T-cell (primary cell): ENCODE measurements at regions of chr17 and their contacts with region 1.

Region 1: DNA sequence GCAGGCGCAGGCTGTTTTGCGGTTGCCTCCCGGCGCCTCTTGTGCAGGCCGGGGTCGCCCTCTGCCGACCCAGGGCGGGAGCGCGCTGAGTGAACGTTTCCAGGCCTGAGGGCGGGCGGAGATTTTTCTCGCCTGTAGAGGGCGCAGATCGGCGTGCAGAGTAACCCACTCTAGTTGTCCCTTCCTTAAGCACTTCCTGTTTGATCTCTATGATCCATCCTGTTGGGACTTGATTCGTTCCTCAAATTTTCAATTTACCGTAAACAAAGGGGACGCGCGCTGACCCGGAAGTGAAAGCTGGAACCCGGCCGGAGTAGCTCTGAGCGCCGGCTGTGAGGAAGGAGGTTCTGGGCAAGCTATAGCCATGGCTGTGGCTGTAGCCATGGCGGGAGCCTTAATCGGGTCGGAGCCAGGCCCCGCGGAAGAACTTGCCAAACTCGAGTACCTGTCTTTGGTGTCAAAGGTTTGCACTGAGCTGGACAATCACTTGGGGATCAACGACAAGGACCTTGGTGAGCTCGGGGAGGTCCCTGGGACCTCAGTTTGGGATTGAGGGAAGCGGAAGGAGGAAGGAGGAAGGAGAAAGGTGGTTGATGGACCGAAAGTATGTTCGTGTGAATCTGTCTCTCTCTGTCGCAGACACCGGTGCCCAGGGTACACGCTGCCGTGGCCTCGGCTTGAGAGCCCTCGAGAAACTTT is at the start of gene DHX8:
- DNase-seq: peak; percentile 92 to 100 (median 98)
- ATAC-seq: peak; percentile 95 to 99 (median 96)
- H3K4me3 ChIP-seq: peak within 1 kb of the TSS; percentile 85 to 96
- H3K4me3 Mint-ChIP-seq: peak within 1 kb of the TSS; percentile 100
- H3K27ac ChIP-seq: peak within 1 kb of the TSS; percentile 70
- H3K27ac Mint-ChIP-seq: peak within 1 kb of the TSS; percentile 99
- H3K4me1 ChIP-seq: peaks cover 15 to 24% of the 10 kb centered on the region in 2 experiments
- H3K4me1 Mint-ChIP-seq: peaks cover 25 to 41% (median 39%) of the 10 kb centered on the region in 3 donors
- H3K27me3 ChIP-seq: no peaks in the 10 kb centered on the region
- H3K27me3 Mint-ChIP-seq: no peaks in the 10 kb centered on the region
- total RNA-seq, gene DHX8: 68.9 to 103 (median 76.1) TPM

Region 2: DNA sequence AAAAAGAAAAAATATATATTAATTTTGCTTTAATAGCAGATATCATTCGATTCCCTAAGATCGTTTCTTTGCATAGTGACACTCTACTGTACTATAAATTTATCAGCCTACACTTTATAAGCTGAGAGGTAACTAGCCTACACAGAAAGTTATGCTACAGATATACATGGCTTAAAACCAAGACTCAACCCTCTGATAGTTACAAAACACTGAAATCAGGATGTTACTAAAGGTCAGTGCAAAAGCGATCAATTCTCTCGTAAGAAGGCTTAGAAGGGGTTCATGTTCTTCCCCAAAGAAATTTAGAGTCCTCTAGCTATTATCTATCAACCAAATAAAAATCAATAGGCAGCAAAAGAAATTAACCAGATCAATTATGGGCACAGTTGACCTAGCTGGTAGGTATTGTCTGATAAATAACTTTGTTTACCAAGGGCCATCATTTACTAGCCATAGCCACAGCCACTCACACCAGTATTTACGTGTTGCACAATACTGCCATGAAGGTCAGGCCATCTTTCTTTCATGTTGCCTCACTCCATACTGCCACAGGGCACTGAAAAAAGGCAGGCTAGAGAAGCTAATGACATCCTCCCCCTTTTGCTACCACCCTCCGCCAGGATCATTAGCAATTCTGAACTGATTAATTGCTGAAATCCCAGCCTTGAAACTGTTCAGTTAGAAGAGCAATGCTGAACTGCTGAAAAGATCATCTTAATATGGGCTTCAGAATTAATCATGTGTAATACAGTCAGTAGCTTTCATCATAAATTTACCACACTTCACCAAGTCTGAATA is 415.1 kb before region 1 on chr17:
- CTCF ChIA-PET with region 1: interaction called in 1 of 2 experiments, 12 read pairs
- POLR2A ChIA-PET with region 1: no interaction called
- DNase-seq: no peak
- ATAC-seq: no peak
- H3K4me3 ChIP-seq: no peak overlapping the region
- H3K4me3 Mint-ChIP-seq: no peak overlapping the region
- H3K27ac ChIP-seq: no peak overlapping the region
- H3K27ac Mint-ChIP-seq: no peak overlapping the region
- H3K4me1 ChIP-seq: no peaks in the 10 kb centered on the region
- H3K4me1 Mint-ChIP-seq: no peaks in the 10 kb centered on the region
- H3K27me3 ChIP-seq: no peaks in the 10 kb centered on the region
- H3K27me3 Mint-ChIP-seq: no peaks in the 10 kb centered on the region

Region 3: DNA sequence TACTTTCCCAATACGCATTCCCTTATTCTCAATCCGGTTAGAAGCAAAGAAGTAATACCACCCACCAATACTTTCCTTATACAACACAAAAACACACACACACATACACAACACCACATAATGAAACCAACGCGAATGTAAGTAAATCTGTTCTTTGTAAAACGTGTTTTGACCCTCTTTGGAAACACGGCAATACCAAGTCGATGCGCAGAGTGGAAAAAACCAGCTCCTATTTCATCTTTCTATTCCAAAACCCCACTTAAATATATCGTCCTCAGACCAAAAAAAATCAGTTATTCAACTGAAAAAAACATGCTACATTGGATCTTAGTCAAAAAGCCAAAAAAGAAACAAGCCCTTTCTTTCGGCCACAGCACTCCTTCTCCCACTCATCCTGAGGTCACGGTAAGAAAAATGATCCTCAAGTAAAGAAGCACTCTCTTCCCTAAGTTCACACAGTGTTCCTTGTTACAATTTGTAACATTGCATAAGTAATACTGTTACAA is 116.0 kb before region 1 on chr17:
- CTCF ChIA-PET with region 1: interaction called in 1 of 2 experiments, 20 read pairs
- POLR2A ChIA-PET with region 1: interaction called, 3 to 23 read pairs
- DNase-seq: peak in 3 of 35 experiments; percentile 6 to 78 (median 36)
- ATAC-seq: peak; percentile 35 to 53 (median 44)
- H3K4me3 ChIP-seq: peak overlapping the region; percentile 84 to 86
- H3K4me3 Mint-ChIP-seq: peak overlapping the region; percentile 78 to 97 (median 90)
- H3K27ac ChIP-seq: peak overlapping the region; percentile 96
- H3K27ac Mint-ChIP-seq: peak overlapping the region; percentile 100
- H3K4me1 ChIP-seq: peaks cover 12 to 33% of the 10 kb centered on the region in 2 experiments
- H3K4me1 Mint-ChIP-seq: peaks cover 38 to 58% (median 52%) of the 10 kb centered on the region in 3 donors
- H3K27me3 ChIP-seq: no peaks in the 10 kb centered on the region
- H3K27me3 Mint-ChIP-seq: no peaks in the 10 kb centered on the region

Region 4: DNA sequence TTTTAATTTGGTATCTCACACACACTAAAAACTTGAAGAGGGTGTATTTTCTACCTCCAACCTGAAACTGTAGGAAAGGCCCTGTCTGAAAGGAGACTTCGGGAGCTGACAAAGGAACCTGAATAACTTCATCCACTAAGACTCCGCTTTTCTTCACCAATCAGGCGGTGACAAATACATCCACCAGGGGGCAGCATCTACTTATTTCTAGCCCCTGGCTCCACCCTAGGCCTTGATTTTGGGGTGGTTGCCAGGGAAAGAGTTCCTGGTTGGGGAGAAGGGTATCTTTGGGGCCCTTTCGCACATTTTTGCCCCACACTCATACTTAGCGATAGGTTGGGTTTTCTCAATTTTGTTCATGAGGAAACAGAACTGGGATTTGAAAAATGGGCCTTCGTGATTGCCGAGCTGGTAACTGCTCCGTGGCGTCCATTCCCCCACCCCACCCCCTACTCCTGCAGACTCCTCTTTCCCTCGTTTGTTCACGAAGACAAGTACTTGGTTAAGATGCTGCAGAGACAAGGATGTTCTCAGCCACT is 89.8 kb before region 1 on chr17:
- CTCF ChIA-PET with region 1: interaction called, 4 to 48 read pairs
- POLR2A ChIA-PET with region 1: interaction called in 1 of 2 experiments, 10 read pairs
- DNase-seq: peak; percentile 66 to 93 (median 84)
- ATAC-seq: peak; percentile 31 to 51 (median 38)
- H3K4me3 ChIP-seq: no peak overlapping the region
- H3K4me3 Mint-ChIP-seq: no peak overlapping the region
- H3K27ac ChIP-seq: no peak overlapping the region
- H3K27ac Mint-ChIP-seq: peak overlapping the region; percentile 34 to 46
- H3K4me1 ChIP-seq: peaks cover 11 to 35% of the 10 kb centered on the region in 2 experiments
- H3K4me1 Mint-ChIP-seq: peaks cover 25 to 46% (median 30%) of the 10 kb centered on the region in 3 donors
- H3K27me3 ChIP-seq: no peaks in the 10 kb centered on the region
- H3K27me3 Mint-ChIP-seq: no peaks in the 10 kb centered on the region